Aorta (tissue), 5 donors: ENCODE measurements at regions of chr20 and their contacts with region 1.

Region 1: GRCh38 chr20:44018259-44018941 is 103.7 kb downstream of the TOX2 start:
- DNase-seq: peak; percentile 85
- ATAC-seq: peak; percentile 69
- H3K4me3 ChIP-seq: peak overlapping the region in 1 of 2 donors; percentile 16
- H3K27ac ChIP-seq: peak overlapping the region; percentile 25 to 94
- H3K4me1 ChIP-seq: peaks cover 1 to 5% of the 10 kb centered on the region in 2 donors
- H3K27me3 ChIP-seq: no peaks in the 10 kb centered on the region

Region 2: GRCh38 chr20:43840382-43841070 is 177.9 kb before region 1 on chr20:
- intact Hi-C with region 1: loop called in 1 of 2 experiments (anchors 5 kb)
- DNase-seq: no peak
- ATAC-seq: no peak
- H3K4me3 ChIP-seq: no peak overlapping the region
- H3K27ac ChIP-seq: no peak overlapping the region
- H3K4me1 ChIP-seq: no peaks in the 10 kb centered on the region
- H3K27me3 ChIP-seq: no peaks in the 10 kb centered on the region

Region 3: GRCh38 chr20:43914311-43915210 is 103.8 kb before region 1 on chr20 and contains the start of gene TOX2:
- intact Hi-C with region 1: loop called in 1 of 2 experiments (anchors 5 kb)
- DNase-seq: peak; percentile 65 to 83
- ATAC-seq: peak; percentile 47
- H3K4me3 ChIP-seq: peak within 1 kb of the TSS; percentile 38 to 83
- H3K27ac ChIP-seq: no peak within 1 kb of the TSS
- H3K4me1 ChIP-seq: no peaks in the 10 kb centered on the region
- H3K27me3 ChIP-seq: no peaks in the 10 kb centered on the region
- total RNA-seq, gene TOX2: 11.9 to 17.2 TPM

Region 4: DNA sequence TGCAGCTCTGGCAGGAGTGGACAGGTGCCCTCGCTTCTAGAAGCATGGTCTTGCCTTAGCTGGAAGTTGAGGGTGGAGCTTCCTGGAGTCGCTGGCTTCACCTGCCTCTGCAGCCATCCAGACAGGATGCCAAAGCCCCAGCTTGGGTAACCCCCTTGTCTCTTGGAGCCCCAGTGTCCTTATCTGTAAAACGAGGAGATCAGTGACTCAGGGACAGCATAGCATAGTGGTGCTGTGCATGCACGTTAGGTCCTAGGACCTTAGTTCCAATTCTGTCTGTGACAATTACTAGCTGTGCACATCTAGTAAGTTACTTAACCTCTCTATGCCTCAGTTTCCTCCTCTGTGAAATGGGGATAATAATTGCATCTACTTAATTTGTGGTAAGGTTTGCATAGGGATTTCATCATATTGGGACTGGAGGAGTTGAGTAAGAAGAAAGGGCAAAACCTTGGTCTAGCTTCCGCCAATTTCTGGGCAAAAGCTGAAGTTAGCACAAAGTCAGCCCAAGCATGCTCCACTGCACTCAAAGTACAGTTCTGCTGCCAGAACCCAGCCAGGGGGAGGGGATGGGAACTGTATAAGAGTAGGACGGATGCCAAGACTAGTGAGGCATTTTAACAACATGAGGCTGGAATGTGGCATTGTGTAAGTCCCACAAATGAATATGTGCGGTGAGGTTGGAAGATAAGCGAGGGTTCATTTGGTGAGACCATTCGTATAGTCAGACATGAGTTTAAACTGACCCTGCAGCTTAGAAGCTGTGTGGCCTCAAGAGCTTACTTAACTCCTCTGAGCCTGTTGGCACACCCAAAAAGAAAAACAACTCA is 79.3 kb before region 1 on chr20:
- intact Hi-C with region 1: loop called in 1 of 2 experiments (anchors 5 kb)
- DNase-seq: peak; percentile 88 to 90
- ATAC-seq: peak; percentile 61
- H3K4me3 ChIP-seq: no peak overlapping the region
- H3K27ac ChIP-seq: no peak overlapping the region
- H3K4me1 ChIP-seq: no peaks in the 10 kb centered on the region
- H3K27me3 ChIP-seq: no peaks in the 10 kb centered on the region

Region 5: GRCh38 chr20:43949741-43950618 is 68.4 kb before region 1 on chr20:
- intact Hi-C with region 1: no loop called
- DNase-seq: peak; percentile 64 to 75
- ATAC-seq: no peak
- H3K4me3 ChIP-seq: no peak overlapping the region
- H3K27ac ChIP-seq: no peak overlapping the region
- H3K4me1 ChIP-seq: peaks cover 0 to under 1% of the 10 kb centered on the region in 2 donors
- H3K27me3 ChIP-seq: no peaks in the 10 kb centered on the region

Region 6: DNA sequence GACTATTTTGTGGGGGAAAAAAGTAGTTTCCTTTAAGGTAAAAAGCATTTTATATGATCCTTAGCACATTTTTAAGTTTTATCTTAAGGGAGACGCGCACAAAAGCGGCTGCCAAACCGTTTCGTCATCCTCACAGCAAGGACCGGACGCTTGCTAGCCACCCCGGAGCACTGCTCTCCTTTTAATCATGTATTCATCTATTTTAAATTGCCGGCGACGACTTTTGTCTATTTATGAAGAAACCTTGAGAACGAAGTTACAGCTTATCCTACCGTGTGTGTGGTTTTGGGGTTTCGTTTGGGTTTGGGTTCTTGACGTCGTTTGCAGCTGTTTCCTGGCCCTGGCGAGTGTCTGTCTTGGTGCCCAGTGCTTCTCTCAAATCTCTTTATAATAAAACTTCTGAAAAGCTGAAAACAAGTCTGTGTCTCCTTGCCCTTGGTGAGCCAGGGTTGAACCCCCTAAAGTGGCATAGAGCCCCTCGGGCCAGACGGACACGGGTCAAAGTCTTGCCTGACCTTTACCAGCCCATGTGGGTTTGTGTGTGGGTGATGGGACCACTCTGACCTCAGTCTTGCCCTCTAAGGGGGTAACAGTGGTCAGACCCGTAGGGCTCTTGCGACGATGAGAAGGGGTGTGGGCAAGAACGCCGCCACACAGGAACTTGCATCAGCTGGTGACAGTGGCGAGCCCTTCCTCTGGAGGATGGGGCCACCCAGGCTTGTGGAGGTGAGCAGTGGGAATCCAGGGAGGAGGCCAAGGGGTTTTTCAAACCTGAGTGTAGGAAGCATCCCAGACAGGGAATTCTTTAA is 51.0 kb after region 1 on chr20:
- intact Hi-C with region 1: loop called in 1 of 2 experiments (anchors 5 kb)
- DNase-seq: no peak
- ATAC-seq: no peak
- H3K4me3 ChIP-seq: no peak overlapping the region
- H3K27ac ChIP-seq: no peak overlapping the region
- H3K4me1 ChIP-seq: peaks cover 0 to 3% of the 10 kb centered on the region in 2 donors
- H3K27me3 ChIP-seq: no peaks in the 10 kb centered on the region